ENCODE measurements at regions of chr6 and their contacts with region 1.

Region 1: GRCh38 chr6:127120787-127121636 is 2.5 kb downstream of the RSPO3 start:
- DNase-seq: peak; percentile 82

Region 2: DNA sequence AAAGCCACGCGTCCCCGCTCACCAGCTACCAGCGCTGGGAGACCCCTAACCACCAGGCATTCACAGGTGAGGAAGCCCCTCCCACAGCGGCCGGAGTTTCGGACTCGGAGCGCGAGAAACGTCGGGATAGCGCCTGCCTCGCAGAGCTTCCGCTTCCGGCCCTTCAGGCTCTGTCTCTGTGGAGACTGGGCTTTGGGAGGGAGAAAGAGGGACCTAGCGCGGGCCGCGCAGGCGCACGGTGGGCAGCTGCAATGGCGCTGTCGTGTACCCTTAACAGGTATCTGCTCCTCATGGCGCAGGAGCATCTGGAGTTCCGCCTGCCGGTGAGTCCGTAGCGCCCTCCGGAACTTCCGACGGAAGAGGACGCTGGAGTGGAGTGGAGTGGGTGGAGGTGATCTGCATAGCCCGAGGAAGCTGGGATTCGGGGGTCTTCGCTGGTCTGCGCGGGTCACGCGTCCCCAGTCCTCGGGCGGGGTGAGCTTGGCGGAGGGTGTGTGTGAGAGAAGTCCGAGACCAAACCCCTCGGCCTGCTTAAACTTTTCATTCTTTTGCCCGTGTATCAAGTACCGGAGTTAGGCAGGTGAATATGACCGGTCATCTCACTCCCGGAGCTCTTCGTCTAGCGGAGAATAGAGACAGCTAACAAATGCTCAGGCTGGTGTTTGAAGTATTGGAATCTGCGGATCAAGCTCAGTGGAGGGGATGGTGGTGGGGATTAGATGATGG is 1134.5 kb before region 1 on chr6 and contains the start of gene TRMT11:
- intact Hi-C with region 1: loop called (anchors 10 kb)
- DNase-seq: peak; percentile 95
- total RNA-seq, gene TRMT11: 13.3 TPM

Region 3: GRCh38 chr6:126804332-126805064 is 316.5 kb before region 1 on chr6:
- intact Hi-C with region 1: loop called (anchors 5 kb)
- DNase-seq: no peak

Region 4: GRCh38 chr6:127073222-127073621 is 47.8 kb before region 1 on chr6:
- intact Hi-C with region 1: no loop called
- DNase-seq: no peak

Region 5: GRCh38 chr6:127160494-127160893 is 39.5 kb after region 1 on chr6:
- intact Hi-C with region 1: no loop called
- DNase-seq: no peak